Heart left ventricle (tissue), 16 donors: ENCODE measurements at regions of chr1 and their contacts with region 1.

Region 1: GRCh38 chr1:208093754-208094719 is 150.1 kb downstream of the PLXNA2 start:
- DNase-seq: peak; percentile 63 to 85 (median 71)
- ATAC-seq: peak; percentile 38 to 67 (median 59)
- H3K4me3 ChIP-seq: no peak overlapping the region
- H3K27ac ChIP-seq: no peak overlapping the region
- H3K4me1 ChIP-seq: peaks cover 0 to 25% (median 16%) of the 10 kb centered on the region in 12 donors
- H3K27me3 ChIP-seq: no peaks in the 10 kb centered on the region
- CTCF ChIP-seq: peak; percentile 65 to 84 (median 75)
- POLR2A ChIP-seq: no peak

Region 2: GRCh38 chr1:207981976-207982375 is 112.1 kb before region 1 on chr1:
- intact Hi-C with region 1: no loop called
- DNase-seq: no peak
- ATAC-seq: peak in 2 of 4 donors; percentile 49 to 65
- H3K4me3 ChIP-seq: no peak overlapping the region
- H3K27ac ChIP-seq: no peak overlapping the region
- H3K4me1 ChIP-seq: no peaks in the 10 kb centered on the region
- H3K27me3 ChIP-seq: no peaks in the 10 kb centered on the region
- CTCF ChIP-seq: peak; percentile 8 to 50 (median 27)
- POLR2A ChIP-seq: no peak

Region 3: GRCh38 chr1:208024406-208024805 is 69.6 kb before region 1 on chr1:
- intact Hi-C with region 1: loop called (anchors 1 to 10 kb)
- DNase-seq: no peak
- ATAC-seq: no peak
- H3K4me3 ChIP-seq: no peak overlapping the region
- H3K27ac ChIP-seq: no peak overlapping the region
- H3K4me1 ChIP-seq: peaks cover 0 to 48% (median 5%) of the 10 kb centered on the region in 12 donors
- H3K27me3 ChIP-seq: no peaks in the 10 kb centered on the region
- CTCF ChIP-seq: no peak
- POLR2A ChIP-seq: no peak

Region 4: DNA sequence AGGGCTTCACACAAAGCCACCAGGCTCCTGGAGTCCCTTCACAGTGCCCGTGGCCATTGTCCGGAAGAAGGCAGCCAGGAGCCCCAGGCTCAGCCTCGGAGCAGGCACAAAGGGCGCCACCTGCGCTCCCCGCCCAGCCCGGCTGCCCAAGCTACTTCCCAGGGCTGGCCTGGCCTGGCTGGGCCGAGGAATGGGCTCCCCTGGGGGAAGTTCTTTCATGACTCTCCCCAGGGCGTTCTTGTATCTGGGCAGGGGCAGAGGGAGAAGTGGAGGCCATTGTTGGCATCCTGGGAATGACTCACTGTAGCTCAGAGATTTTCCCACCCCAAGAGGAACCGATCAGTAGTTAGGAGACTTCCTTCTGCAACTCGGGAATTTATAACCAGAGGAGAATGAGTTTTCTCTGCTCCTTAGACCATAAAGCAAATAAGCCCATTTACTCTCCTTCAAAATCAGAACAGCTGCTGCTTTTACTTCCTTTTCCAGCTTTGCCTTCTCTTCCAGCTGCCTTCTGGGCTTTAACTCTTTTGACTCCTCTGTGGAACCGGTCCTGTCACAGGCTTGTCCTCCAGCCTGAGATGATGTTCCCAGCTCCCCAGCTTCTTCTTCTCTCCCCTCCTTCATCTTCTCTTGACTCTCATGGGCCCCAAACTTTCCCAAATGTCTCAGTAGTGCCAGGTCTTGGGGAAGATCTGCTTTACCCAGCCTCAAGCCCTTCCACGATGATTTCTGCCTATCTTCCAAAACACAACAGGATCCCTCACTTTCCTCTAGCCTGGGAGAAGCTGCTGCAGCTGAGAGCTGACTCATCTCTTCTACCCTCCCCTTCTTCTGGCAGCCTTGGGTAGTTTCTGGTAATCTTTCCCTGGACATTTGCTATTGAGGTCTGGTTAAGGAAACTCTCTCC is 64.4 kb before region 1 on chr1:
- intact Hi-C with region 1: loop called in 8 of 10 experiments (anchors 5 to 10 kb)
- DNase-seq: peak in 1 of 5 donors; percentile 32
- ATAC-seq: peak; percentile 39 to 74 (median 60)
- H3K4me3 ChIP-seq: peak overlapping the region in 2 of 12 donors; percentile 19 to 26
- H3K27ac ChIP-seq: peak overlapping the region; percentile 56 to 94 (median 77)
- H3K4me1 ChIP-seq: peaks cover 0 to 54% (median 21%) of the 10 kb centered on the region in 12 donors
- H3K27me3 ChIP-seq: no peaks in the 10 kb centered on the region
- CTCF ChIP-seq: no peak
- POLR2A ChIP-seq: no peak

Region 5: DNA sequence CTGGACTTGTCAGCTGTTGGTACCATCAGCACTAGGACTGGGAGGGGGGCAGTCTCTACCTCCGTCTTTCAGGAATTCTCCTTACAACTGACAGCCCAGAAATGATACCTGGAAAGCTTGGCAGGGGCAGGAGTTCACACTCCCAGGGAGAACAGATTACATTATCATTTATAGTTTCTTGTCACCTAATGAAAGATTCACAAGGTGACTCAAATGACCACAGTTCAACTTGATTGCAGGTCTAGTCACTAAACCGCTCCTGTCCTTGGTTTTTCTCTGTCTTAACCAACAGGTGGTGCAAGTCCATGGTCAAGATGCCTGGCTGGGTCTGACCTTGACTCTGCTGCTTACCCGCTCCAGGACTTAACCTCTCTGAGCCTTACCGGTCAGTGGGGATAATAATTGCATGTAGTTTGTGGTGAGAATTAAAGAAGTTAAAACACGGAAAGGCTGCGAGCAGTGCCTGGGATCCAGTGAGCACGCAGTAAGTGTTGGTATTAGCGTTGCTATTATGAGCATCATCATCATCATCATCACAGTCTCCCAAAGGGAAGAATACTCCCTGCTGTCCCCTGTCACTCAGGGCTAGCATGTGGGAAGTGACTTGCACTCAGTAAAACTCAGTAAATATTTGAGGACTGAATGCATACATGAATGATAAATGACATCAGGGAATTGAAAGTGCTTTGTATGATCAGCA is 57.8 kb before region 1 on chr1:
- intact Hi-C with region 1: loop called in 1 of 10 experiments (anchors 1 kb)
- DNase-seq: no peak
- ATAC-seq: peak in 3 of 4 donors; percentile 43 to 44 (median 43)
- H3K4me3 ChIP-seq: no peak overlapping the region
- H3K27ac ChIP-seq: no peak overlapping the region
- H3K4me1 ChIP-seq: peaks cover 0 to 9% (median 1%) of the 10 kb centered on the region in 12 donors
- H3K27me3 ChIP-seq: no peaks in the 10 kb centered on the region
- CTCF ChIP-seq: peak in 9 of 12 donors; percentile 6 to 47 (median 28)
- POLR2A ChIP-seq: no peak

Region 6: GRCh38 chr1:208857465-208857864 is 763.4 kb after region 1 on chr1:
- intact Hi-C with region 1: no loop called
- DNase-seq: no peak
- ATAC-seq: no peak
- H3K4me3 ChIP-seq: no peak overlapping the region
- H3K27ac ChIP-seq: no peak overlapping the region
- H3K4me1 ChIP-seq: no peaks in the 10 kb centered on the region
- H3K27me3 ChIP-seq: peaks cover 0 to 3% (median 0%) of the 10 kb centered on the region in 9 donors
- CTCF ChIP-seq: no peak
- POLR2A ChIP-seq: no peak